ENCODE measurements at regions of chr16 and their contacts with region 1.

Region 1: DNA sequence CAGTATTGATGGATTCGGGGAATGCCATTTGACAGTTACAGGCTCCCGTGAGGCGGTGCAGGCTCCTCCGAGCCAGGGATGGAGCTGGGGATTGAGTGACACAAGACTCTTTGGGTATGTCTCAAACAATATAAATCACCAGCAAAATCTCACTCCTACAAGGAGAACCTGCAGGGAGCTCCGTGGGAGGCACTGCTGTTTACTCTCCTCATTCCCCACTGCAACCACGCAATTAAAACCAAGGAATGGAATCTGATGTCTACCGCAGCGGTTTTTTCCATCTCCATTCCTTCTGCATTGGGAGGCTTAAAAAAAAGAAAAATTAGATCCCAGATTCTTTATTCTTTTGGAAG is 157.9 kb downstream of the WWOX start:
- DNase-seq: peak in 1 of 2 experiments; percentile 37
- H3K4me3 ChIP-seq: no peak overlapping the region
- H3K4me3 Mint-ChIP-seq: peak overlapping the region; percentile 53
- H3K27ac Mint-ChIP-seq: peak overlapping the region; percentile 71
- H3K4me1 ChIP-seq: peaks cover 44% of the 10 kb centered on the region
- H3K4me1 Mint-ChIP-seq: peaks cover 29% of the 10 kb centered on the region
- H3K27me3 ChIP-seq: no peaks in the 10 kb centered on the region
- H3K27me3 Mint-ChIP-seq: no peaks in the 10 kb centered on the region
- CTCF ChIP-seq: no peak

Region 2: GRCh38 chr16:78060293-78060692 is 197.1 kb before region 1 on chr16:
- CTCF ChIA-PET with region 1: no interaction called
- POLR2A ChIA-PET with region 1: no interaction called
- intact Hi-C with region 1: no loop called
- DNase-seq: peak in 1 of 2 experiments; percentile 25
- H3K4me3 ChIP-seq: no peak overlapping the region
- H3K4me3 Mint-ChIP-seq: peak overlapping the region; percentile 16
- H3K27ac Mint-ChIP-seq: peak overlapping the region; percentile 75
- H3K4me1 ChIP-seq: peaks cover 15% of the 10 kb centered on the region
- H3K4me1 Mint-ChIP-seq: peaks cover 25% of the 10 kb centered on the region
- H3K27me3 ChIP-seq: no peaks in the 10 kb centered on the region
- H3K27me3 Mint-ChIP-seq: no peaks in the 10 kb centered on the region
- CTCF ChIP-seq: peak; percentile 16 to 39

Region 3: DNA sequence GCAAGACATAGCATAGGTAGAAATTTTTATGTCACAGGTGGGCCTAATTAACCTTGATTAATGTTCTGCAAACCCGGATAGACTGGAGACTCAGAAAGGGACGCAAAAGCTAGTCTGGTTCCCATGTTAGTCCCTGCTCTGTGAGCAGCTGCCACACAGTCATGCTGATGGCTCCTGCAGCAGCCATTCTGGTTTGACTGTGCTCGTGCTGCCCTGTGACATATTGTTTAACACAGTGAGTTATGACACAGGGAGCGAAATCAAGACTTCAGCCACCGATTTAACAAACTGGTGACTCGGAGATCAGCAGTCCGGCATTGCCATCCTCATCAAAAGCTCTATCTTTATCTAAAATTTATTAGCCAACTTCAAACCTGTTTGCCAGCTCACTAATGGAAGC is 11.9 kb after region 1 on chr16:
- CTCF ChIA-PET with region 1: no interaction called
- POLR2A ChIA-PET with region 1: no interaction called
- intact Hi-C with region 1: no loop called
- DNase-seq: no peak
- H3K4me3 ChIP-seq: no peak overlapping the region
- H3K4me3 Mint-ChIP-seq: no peak overlapping the region
- H3K27ac Mint-ChIP-seq: no peak overlapping the region
- H3K4me1 ChIP-seq: no peaks in the 10 kb centered on the region
- H3K4me1 Mint-ChIP-seq: no peaks in the 10 kb centered on the region
- H3K27me3 ChIP-seq: no peaks in the 10 kb centered on the region
- H3K27me3 Mint-ChIP-seq: no peaks in the 10 kb centered on the region
- CTCF ChIP-seq: no peak

Region 4: GRCh38 chr16:78425891-78426510 is 168.6 kb after region 1 on chr16:
- CTCF ChIA-PET with region 1: no interaction called
- POLR2A ChIA-PET with region 1: no interaction called
- intact Hi-C with region 1: no loop called
- DNase-seq: no peak
- H3K4me3 ChIP-seq: no peak overlapping the region
- H3K4me3 Mint-ChIP-seq: no peak overlapping the region
- H3K27ac Mint-ChIP-seq: no peak overlapping the region
- H3K4me1 ChIP-seq: no peaks in the 10 kb centered on the region
- H3K4me1 Mint-ChIP-seq: no peaks in the 10 kb centered on the region
- H3K27me3 ChIP-seq: no peaks in the 10 kb centered on the region
- H3K27me3 Mint-ChIP-seq: no peaks in the 10 kb centered on the region
- CTCF ChIP-seq: no peak

Region 5: DNA sequence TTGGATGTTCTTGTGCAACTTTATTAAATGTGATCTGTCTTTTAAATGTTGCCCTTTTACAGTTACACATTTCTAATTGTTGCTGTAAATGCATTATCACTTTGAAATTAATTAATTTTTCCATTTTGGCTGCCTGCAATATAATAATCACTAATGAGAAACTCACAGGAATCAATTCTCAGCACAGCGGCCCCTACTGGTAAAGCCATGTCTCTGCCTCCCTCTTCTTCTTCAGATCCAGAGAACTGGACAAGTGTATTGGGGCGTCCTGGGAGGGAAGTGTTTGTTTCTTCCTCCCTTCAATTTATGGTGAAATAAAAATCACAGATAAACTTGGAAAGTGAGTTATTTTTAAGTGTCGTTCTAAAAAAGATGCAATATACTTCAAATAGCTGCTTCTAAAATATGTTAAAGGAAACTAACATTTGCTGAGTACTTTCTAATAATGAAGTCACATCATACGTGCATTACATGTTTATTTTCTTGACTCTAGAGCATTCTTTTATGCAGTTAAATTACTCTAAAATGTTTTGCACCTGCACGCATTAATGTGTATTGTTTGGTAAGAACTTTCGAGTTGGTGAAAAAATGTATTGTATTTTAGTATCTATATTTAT is 180.1 kb after region 1 on chr16:
- CTCF ChIA-PET with region 1: no interaction called
- POLR2A ChIA-PET with region 1: no interaction called
- intact Hi-C with region 1: loop called (anchors 5 kb)
- DNase-seq: peak in 1 of 2 experiments; percentile 58
- H3K4me3 ChIP-seq: no peak overlapping the region
- H3K4me3 Mint-ChIP-seq: no peak overlapping the region
- H3K27ac Mint-ChIP-seq: no peak overlapping the region
- H3K4me1 ChIP-seq: peaks cover 8% of the 10 kb centered on the region
- H3K4me1 Mint-ChIP-seq: peaks cover 14% of the 10 kb centered on the region
- H3K27me3 ChIP-seq: no peaks in the 10 kb centered on the region
- H3K27me3 Mint-ChIP-seq: no peaks in the 10 kb centered on the region
- CTCF ChIP-seq: peak; percentile 88

Measured in Caco-2 (cell line).